Dorsolateral prefrontal cortex (tissue), 120 donors: ENCODE measurements at regions of chr19 and their contacts with region 1.

Region 1: GRCh38 chr19:17075035-17075863 is at the starts of genes HAUS8 and MYO9B:
- DNase-seq: peak; percentile 98 to 100 (median 99)
- H3K4me3 ChIP-seq: peak within 1 kb of the TSS; percentile 56 to 97 (median 85)
- H3K27ac ChIP-seq: peak within 1 kb of the TSS in 58 of 59 donors; percentile 10 to 98 (median 81)
- H3K27me3 ChIP-seq: no peaks in the 10 kb centered on the region
- CTCF ChIP-seq: peak in 20 of 56 donors; percentile 5 to 43 (median 22)
- total RNA-seq, gene HAUS8: 1.9 to 8.7 (median 4.2) TPM
- total RNA-seq, gene MYO9B: 49.9 to 250 (median 101) TPM

Region 2: GRCh38 chr19:16942583-16942982 is 132.7 kb before region 1 on chr19:
- intact Hi-C with region 1: no loop called
- DNase-seq: peak in 2 of 10 donors; percentile 26 to 36
- H3K4me3 ChIP-seq: no peak overlapping the region
- H3K27ac ChIP-seq: no peak overlapping the region
- H3K27me3 ChIP-seq: no peaks in the 10 kb centered on the region
- CTCF ChIP-seq: no peak

Region 3: DNA sequence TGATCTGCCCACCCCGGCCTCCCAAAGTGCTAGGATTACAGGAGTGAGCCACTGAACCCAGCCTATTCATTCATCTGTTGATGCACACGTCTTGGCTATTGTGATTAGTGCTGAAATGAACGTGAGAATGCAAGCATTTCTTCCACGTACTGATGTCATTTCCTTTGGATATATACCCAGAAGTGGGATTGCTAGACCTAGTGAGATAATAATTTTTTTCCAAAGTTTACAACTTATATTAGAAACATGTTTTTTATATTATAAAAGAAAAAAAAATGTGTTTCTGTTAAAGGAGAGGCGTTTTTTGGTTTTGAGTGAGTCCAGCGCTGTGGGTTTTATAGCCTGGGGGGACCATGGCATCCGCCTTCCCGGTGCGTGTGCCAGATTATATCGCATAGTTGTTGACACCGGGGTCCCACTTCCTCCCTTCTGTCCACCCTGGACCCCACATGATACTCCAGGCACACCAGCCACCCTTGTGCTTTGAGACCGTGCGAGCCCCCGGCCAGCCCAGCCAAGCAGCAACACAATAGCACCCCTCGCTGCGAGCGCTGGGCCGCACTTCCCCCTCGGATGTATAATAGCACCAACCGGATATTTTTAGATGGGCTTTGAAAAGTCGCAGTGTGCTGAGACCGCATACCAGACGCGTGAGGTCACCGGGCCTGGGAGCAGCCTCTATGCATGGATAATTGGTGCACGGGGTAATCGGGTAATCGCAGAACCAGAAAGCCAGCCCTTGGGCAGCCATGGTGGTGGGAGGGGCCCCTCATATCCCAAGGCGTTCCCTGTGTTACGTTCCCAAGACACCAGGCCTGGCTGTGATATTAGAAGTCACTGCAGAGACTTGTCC is 60.0 kb after region 1 on chr19:
- intact Hi-C with region 1: loop called (anchors 5 kb)
- DNase-seq: peak; percentile 58 to 80 (median 70)
- H3K4me3 ChIP-seq: peak overlapping the region in 56 of 59 donors; percentile 0 to 59 (median 36)
- H3K27ac ChIP-seq: peak overlapping the region; percentile 5 to 92 (median 83)
- H3K27me3 ChIP-seq: no peaks in the 10 kb centered on the region
- CTCF ChIP-seq: peak in 34 of 56 donors; percentile 11 to 53 (median 30)

Region 4: GRCh38 chr19:17205237-17206140 is 130.2 kb after region 1 on chr19:
- intact Hi-C with region 1: loop called in 1 of 2 experiments (anchors 5 kb)
- DNase-seq: peak in 9 of 10 donors; percentile 30 to 69 (median 66)
- H3K4me3 ChIP-seq: no peak overlapping the region
- H3K27ac ChIP-seq: peak overlapping the region in 1 of 59 donors; percentile 1
- H3K27me3 ChIP-seq: no peaks in the 10 kb centered on the region
- CTCF ChIP-seq: peak; percentile 24 to 80 (median 62)

Region 5: GRCh38 chr19:17215125-17215971 is 140.1 kb after region 1 on chr19 and contains the start of gene USE1:
- intact Hi-C with region 1: loop called (anchors 5 kb)
- DNase-seq: peak; percentile 81 to 92 (median 91)
- H3K4me3 ChIP-seq: peak within 1 kb of the TSS; percentile 59 to 94 (median 81)
- H3K27ac ChIP-seq: peak within 1 kb of the TSS; percentile 44 to 99 (median 94)
- H3K27me3 ChIP-seq: no peaks in the 10 kb centered on the region
- CTCF ChIP-seq: peak in 33 of 56 donors; percentile 8 to 59 (median 25)
- total RNA-seq, gene USE1: 27.0 to 54.1 (median 39.3) TPM

Region 6: GRCh38 chr19:17282488-17283255 is 207.4 kb after region 1 on chr19:
- intact Hi-C with region 1: loop called in 1 of 2 experiments (anchors 5 kb)
- DNase-seq: peak; percentile 68 to 87 (median 77)
- H3K4me3 ChIP-seq: peak overlapping the region; percentile 16 to 64 (median 48)
- H3K27ac ChIP-seq: no peak overlapping the region
- H3K27me3 ChIP-seq: peaks cover 0 to 12% (median 0%) of the 10 kb centered on the region in 45 donors
- CTCF ChIP-seq: peak; percentile 64 to 97 (median 92)